A549 (cell line): ENCODE measurements at regions of chr5 and their contacts with region 1.

Region 1: DNA sequence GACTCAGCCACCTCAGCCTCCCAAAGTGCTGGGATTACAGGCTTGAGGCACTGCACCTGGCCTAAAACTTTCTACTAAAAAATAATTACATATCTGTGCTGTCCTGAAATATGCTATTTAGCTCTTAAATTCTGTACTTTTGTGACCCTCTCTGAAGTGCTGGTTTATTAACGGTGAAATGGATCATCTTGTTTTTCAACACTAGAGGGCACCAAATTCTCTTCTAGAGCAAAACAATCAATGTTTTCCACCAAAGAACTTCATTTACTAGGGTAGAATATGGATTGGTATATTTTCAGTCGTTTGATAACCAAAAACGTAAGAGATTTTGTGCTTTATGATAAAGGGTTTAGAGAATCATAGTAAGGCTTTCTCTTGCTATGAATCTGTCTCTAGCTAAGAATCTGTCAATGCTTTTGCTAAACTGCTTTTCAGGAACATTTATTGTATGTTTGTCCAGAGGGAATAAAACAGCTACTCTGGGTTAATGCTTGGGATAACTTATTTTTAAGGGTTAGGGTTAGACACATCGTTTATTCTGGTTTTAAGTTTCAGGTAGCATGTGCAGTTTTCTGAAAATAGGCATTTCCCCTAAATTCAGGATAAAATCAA is 63.6 kb downstream of the RNF180 start:
- DNase-seq: peak; percentile 28 to 33
- ATAC-seq: peak in 1 of 2 experiments; percentile 67; a peak in 3 of 6 replicates
- H3K4me3 ChIP-seq: no peak overlapping the region
- H3K27ac ChIP-seq: no peak overlapping the region
- H3K4me1 ChIP-seq: no peaks in the 10 kb centered on the region
- CTCF ChIP-seq: peak; percentile 70
- EP300 ChIP-seq: no peak
- POLR2A ChIP-seq: no peak
- RAD21 ChIP-seq: peak; percentile 54 to 56

Region 2: DNA sequence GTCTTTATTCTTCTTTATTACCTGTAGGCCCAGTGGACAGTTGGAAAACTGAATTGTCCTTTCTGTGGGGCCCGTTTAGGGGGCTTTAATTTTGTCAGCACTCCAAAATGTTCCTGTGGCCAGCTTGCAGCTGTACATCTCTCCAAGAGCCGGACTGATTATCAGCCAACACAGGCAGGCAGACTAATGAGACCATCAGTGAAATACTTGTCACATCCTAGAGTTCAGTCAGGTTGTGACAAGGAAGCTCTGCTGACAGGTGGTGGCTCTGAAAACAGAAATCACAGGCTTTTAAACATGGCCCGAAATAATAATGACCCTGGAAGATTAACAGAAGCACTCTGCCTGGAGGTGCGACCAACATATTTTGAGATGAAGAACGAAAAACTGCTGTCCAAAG is 15.7 kb before region 1 on chr5:
- CTCF ChIA-PET with region 1: interaction called, 11 read pairs
- POLR2A ChIA-PET with region 1: no interaction called
- DNase-seq: no peak
- ATAC-seq: no peak
- H3K4me3 ChIP-seq: no peak overlapping the region
- H3K27ac ChIP-seq: no peak overlapping the region
- H3K4me1 ChIP-seq: no peaks in the 10 kb centered on the region
- CTCF ChIP-seq: no peak
- EP300 ChIP-seq: no peak
- POLR2A ChIP-seq: no peak
- RAD21 ChIP-seq: no peak

Region 3: DNA sequence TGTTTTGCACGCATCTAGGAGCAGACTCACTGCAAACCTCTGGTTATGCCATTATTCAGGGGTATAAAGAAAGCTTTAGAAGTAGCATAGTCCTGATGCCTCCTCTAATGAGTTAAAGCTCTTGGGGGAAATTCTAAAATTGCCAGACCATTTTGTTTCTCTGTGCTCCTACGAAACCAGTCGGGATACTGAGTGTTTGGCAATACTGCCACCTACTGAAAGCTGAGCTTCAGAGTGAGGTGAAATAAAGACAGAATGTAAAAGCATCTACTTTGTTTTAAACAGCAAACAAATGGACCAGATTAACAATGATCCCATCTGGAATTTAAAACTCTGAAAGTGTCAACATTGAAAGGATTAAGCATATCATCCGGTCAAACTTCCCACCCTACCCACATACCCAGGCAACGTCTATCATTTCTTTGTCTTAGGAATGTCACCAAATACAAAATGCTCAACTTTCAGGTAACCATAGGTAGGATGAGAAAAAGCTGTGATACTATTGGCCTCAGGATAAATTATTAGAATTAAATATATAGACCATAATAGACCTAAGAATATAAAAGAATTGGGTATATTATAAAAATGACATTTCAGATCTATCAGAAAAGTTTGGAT is 383.2 kb after region 1 on chr5:
- CTCF ChIA-PET with region 1: interaction called, 82 read pairs
- POLR2A ChIA-PET with region 1: no interaction called
- DNase-seq: peak; percentile 7 to 53
- ATAC-seq: peak; percentile 80 to 81; a peak in 5 of 6 replicates
- H3K4me3 ChIP-seq: no peak overlapping the region
- H3K27ac ChIP-seq: no peak overlapping the region
- H3K4me1 ChIP-seq: no peaks in the 10 kb centered on the region
- CTCF ChIP-seq: peak; percentile 83
- EP300 ChIP-seq: no peak
- POLR2A ChIP-seq: no peak
- RAD21 ChIP-seq: peak; percentile 80 to 87

Region 4: DNA sequence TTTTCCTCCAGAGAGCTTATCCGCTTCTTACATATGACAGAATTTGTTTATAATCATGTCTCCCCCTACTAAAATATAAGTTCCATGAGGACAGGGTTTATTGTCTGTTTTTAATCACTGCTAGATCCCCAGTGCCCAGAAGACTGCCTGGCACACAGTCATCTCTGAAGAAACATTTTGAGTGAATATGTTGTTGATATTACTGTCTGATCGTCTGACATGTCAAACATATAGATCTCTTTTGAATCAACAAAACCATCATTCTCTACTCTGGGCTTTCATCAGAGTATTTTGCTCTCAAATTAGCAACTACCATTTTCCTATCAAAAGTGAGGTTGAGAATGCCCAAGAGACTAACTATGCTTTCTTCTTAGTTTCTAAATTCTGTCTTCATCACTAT is 393.7 kb after region 1 on chr5:
- CTCF ChIA-PET with region 1: interaction called, 11 read pairs
- POLR2A ChIA-PET with region 1: no interaction called
- DNase-seq: no peak
- ATAC-seq: no peak
- H3K4me3 ChIP-seq: no peak overlapping the region
- H3K27ac ChIP-seq: no peak overlapping the region
- H3K4me1 ChIP-seq: no peaks in the 10 kb centered on the region
- CTCF ChIP-seq: no peak
- EP300 ChIP-seq: no peak
- POLR2A ChIP-seq: no peak
- RAD21 ChIP-seq: no peak